ENCODE measurements at regions of chr9 and their contacts with region 1.

Region 1: DNA sequence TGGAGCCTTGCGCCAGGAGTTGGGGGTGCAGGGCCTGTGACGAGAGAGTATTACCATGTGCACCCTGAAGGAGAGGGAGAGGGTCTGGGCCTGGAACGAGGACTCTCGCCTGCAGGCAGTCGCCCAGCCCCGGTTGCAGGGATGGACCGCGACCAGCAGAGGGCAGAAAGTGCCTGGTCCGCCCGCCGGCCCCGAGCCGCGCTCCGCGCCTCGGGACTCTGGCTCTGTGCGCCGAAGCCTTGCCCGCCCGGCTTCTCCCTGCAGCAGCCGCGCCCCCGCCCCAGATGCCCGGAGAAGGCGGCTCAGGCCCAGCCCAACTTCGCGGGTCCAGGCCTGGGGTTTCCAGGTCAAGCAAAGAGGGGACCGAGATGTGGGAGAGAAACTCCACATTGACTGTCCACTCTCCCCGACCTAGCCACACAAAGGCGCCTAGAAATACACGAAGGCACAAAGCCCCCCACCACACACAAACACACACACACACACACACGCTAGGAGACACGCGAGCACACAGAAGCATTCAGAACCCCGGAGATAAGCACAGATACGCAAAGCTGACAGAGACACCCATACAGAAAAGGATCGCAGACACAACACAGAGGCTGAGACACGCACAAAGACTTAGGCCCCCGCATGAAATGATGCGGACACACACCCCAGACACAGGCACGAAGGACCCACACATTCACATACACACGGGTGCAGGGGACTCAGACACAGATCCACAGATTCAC is 2.0 kb upstream of the LMX1B start:
- ATAC-seq: peak; percentile 76 to 92 (median 82)
- H3K4me3 ChIP-seq: no peak overlapping the region
- H3K27ac ChIP-seq: no peak overlapping the region
- H3K4me1 ChIP-seq: no peaks in the 10 kb centered on the region

Region 2: GRCh38 chr9:125707472-125707804 is 904.3 kb before region 1 on chr9:
- in situ Hi-C with region 1: no loop called
- ATAC-seq: peak in 3 of 8 experiments; percentile 9 to 14 (median 10)
- H3K4me3 ChIP-seq: peak overlapping the region in 4 of 5 donors; percentile 8 to 85 (median 74)
- H3K27ac ChIP-seq: peak overlapping the region; percentile 3 to 74
- H3K4me1 ChIP-seq: peaks cover 3 to 11% of the 10 kb centered on the region in 2 donors

Region 3: DNA sequence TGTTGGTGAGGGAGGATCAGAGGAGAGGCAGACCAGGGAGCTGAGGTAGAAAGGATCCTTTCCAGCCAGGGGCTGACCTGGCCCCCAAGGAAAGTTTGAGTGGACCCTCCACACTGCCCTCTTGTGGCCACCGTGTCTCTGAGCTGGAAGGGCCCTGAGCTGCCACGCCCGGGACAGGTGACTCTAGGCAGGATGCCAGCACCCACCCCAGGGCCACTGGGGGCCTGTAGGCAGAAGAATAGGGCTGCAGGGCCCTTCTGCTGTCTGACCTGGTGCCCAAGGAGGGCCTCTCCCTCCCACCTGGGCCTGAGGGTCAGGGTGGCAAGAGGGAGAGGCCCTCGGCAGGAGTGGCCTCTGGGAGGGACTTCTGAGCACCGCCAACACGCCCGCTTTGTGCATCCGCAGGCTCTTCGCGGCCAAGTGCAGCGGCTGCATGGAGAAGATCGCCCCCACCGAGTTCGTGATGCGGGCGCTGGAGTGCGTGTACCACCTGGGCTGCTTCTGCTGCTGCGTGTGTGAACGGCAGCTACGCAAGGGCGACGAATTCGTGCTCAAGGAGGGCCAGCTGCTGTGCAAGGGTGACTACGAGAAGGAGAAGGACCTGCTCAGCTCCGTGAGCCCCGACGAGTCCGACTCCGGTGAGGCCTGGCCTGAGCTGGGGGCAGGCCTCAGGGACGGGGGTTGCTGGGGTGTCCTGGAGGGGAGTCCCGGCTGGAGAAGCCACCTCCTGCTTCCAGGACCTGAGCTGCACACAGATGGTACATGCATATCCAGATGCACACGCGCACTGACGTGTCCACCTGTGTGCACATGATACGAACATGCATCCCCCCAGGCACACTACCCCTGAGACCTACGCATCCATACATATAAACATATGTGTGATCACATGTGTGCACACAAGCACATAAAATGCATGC is 78.9 kb after region 1 on chr9:
- in situ Hi-C with region 1: loop called in 1 of 9 experiments (anchors 10 kb)
- ATAC-seq: peak in 7 of 8 experiments; percentile 22 to 80 (median 44)
- H3K4me3 ChIP-seq: no peak overlapping the region
- H3K27ac ChIP-seq: no peak overlapping the region
- H3K4me1 ChIP-seq: no peaks in the 10 kb centered on the region

Region 4: GRCh38 chr9:126773004-126773607 is 161.3 kb after region 1 on chr9:
- in situ Hi-C with region 1: loop called in 7 of 9 experiments (anchors 25 kb)
- ATAC-seq: peak in 3 of 8 experiments; percentile 69 to 74 (median 69)
- H3K4me3 ChIP-seq: no peak overlapping the region
- H3K27ac ChIP-seq: no peak overlapping the region
- H3K4me1 ChIP-seq: no peaks in the 10 kb centered on the region

Region 5: GRCh38 chr9:126869368-126869767 is 257.6 kb after region 1 on chr9:
- in situ Hi-C with region 1: no loop called
- ATAC-seq: no peak
- H3K4me3 ChIP-seq: no peak overlapping the region
- H3K27ac ChIP-seq: no peak overlapping the region
- H3K4me1 ChIP-seq: peaks cover 16 to 17% of the 10 kb centered on the region in 2 donors

Measured in motor neuron (in vitro differentiated cells).